Aorta (tissue), 5 donors: ENCODE measurements at regions of chr3 and their contacts with region 1.

Region 1: GRCh38 chr3:99638167-99638948 is at the start of gene COL8A1:
- DNase-seq: peak; percentile 91 to 93
- ATAC-seq: peak; percentile 90
- H3K4me3 ChIP-seq: peak within 1 kb of the TSS; percentile 87 to 91
- H3K27ac ChIP-seq: peak within 1 kb of the TSS; percentile 86 to 89
- H3K4me1 ChIP-seq: peaks cover 3 to 6% of the 10 kb centered on the region in 2 donors
- H3K27me3 ChIP-seq: no peaks in the 10 kb centered on the region
- total RNA-seq, gene COL8A1: 264 to 514 TPM

Region 2: DNA sequence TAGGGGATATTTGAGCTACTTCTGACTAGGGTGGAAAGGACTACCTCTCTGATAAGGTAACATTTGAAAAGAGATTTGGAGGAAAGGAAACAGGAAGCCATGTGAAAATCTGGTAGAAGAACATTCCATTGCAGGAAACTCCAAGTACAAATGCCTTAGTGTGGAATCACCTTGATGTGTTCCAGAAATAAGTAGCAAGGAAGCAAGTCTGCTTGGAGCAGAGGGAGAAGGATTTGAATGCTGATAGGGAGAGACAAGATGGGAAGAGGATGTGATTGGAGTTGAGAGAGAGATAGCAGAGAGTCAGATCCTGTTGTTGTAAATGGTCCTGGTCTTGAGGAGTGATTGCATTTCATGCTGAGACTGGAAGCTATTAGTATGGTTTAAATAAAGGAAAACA is 401.8 kb before region 1 on chr3:
- intact Hi-C with region 1: loop called in 1 of 2 experiments (anchors 10 kb)
- DNase-seq: no peak
- ATAC-seq: no peak
- H3K4me3 ChIP-seq: no peak overlapping the region
- H3K27ac ChIP-seq: no peak overlapping the region
- H3K4me1 ChIP-seq: peaks cover 4 to 10% of the 10 kb centered on the region in 2 donors
- H3K27me3 ChIP-seq: no peaks in the 10 kb centered on the region

Region 3: GRCh38 chr3:99429502-99429901 is 208.9 kb before region 1 on chr3:
- intact Hi-C with region 1: loop called in 1 of 2 experiments (anchors 10 kb)
- DNase-seq: no peak
- ATAC-seq: no peak
- H3K4me3 ChIP-seq: no peak overlapping the region
- H3K27ac ChIP-seq: no peak overlapping the region
- H3K4me1 ChIP-seq: peaks cover 0 to 3% of the 10 kb centered on the region in 2 donors
- H3K27me3 ChIP-seq: no peaks in the 10 kb centered on the region

Region 4: DNA sequence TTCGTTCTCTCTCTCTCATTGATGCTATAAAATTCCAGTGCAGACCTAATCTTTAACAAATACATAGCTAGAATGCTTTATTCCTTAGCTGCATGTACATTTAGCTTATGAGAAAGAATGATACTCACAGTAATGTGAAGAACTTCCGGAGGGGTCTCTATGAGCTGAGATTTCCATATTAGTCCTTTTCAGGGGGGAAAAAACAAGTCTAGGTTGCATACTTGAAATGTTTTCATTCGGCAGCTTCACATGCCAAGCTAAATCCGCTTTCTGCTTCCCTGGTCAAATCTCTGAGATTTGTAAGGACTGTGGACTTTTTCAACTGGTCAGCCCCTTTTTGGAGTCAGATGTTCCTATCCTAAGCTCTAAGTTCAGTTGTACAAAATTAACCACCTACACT is 111.4 kb before region 1 on chr3:
- intact Hi-C with region 1: loop called in 1 of 2 experiments (anchors 10 kb)
- DNase-seq: no peak
- ATAC-seq: no peak
- H3K4me3 ChIP-seq: peak overlapping the region; percentile 8 to 26
- H3K27ac ChIP-seq: peak overlapping the region; percentile 71 to 89
- H3K4me1 ChIP-seq: peaks cover 6% of the 10 kb centered on the region in 2 donors
- H3K27me3 ChIP-seq: no peaks in the 10 kb centered on the region

Region 5: DNA sequence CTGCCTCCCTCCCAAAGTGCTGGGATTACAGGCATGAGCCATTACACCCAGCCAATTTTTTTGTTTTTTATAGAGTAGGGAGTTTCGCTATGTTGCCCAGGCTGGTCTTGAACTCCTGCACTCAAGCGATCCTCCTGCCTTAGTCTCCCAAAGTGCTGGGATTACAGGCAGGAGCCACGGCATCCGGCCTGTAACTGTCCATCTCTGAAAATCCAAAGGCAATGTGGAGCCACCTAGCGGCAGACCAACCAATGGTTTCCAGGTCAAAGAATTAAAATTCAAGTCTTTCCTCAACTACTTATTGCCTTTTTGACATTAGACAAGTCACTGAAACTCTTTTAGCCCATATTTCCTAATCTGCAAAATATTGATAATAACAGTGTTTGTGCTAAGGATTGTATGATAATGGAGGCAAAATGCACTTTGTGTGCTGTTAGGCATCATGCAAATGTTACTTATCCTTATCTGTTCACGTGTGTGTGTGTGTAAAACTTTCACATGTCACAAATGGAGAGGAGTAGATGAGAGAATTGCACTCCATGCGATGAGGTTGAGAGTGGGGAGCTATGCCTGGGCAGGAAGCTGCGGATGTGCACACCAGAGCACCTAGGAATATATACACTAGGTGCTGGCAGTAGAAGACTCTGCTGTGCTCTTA is 48.7 kb after region 1 on chr3:
- intact Hi-C with region 1: loop called (anchors 5 kb)
- DNase-seq: peak; percentile 77 to 86
- ATAC-seq: peak; percentile 70
- H3K4me3 ChIP-seq: no peak overlapping the region
- H3K27ac ChIP-seq: no peak overlapping the region
- H3K4me1 ChIP-seq: peaks cover 0 to 3% of the 10 kb centered on the region in 2 donors
- H3K27me3 ChIP-seq: no peaks in the 10 kb centered on the region

Region 6: GRCh38 chr3:99753268-99753975 is 115.1 kb after region 1 on chr3:
- intact Hi-C with region 1: loop called (anchors 5 kb)
- DNase-seq: no peak
- ATAC-seq: peak; percentile 75
- H3K4me3 ChIP-seq: no peak overlapping the region
- H3K27ac ChIP-seq: peak overlapping the region in 1 of 2 donors; percentile 67
- H3K4me1 ChIP-seq: peaks cover 1 to 9% of the 10 kb centered on the region in 2 donors
- H3K27me3 ChIP-seq: no peaks in the 10 kb centered on the region

Region 7: GRCh38 chr3:99884484-99884883 is 246.1 kb after region 1 on chr3:
- intact Hi-C with region 1: no loop called
- DNase-seq: no peak
- ATAC-seq: no peak
- H3K4me3 ChIP-seq: no peak overlapping the region
- H3K27ac ChIP-seq: no peak overlapping the region
- H3K4me1 ChIP-seq: peaks cover 0 to 2% of the 10 kb centered on the region in 2 donors
- H3K27me3 ChIP-seq: no peaks in the 10 kb centered on the region